PC-9 (cell line): ENCODE measurements at regions of chr7 and their contacts with region 1.

Region 1: GRCh38 chr7:105876091-105876963 is at the start of gene ATXN7L1:
- DNase-seq: peak; percentile 86 to 94
- H3K4me3 ChIP-seq: peak within 1 kb of the TSS; percentile 96
- H3K27ac ChIP-seq: peak within 1 kb of the TSS; percentile 69
- H3K4me1 ChIP-seq: peaks cover 24% of the 10 kb centered on the region
- H3K27me3 ChIP-seq: no peaks in the 10 kb centered on the region
- CTCF ChIP-seq: peak; percentile 38
- total RNA-seq, gene ATXN7L1: 10.8 and 14.6 TPM in 2 replicates

Region 2: DNA sequence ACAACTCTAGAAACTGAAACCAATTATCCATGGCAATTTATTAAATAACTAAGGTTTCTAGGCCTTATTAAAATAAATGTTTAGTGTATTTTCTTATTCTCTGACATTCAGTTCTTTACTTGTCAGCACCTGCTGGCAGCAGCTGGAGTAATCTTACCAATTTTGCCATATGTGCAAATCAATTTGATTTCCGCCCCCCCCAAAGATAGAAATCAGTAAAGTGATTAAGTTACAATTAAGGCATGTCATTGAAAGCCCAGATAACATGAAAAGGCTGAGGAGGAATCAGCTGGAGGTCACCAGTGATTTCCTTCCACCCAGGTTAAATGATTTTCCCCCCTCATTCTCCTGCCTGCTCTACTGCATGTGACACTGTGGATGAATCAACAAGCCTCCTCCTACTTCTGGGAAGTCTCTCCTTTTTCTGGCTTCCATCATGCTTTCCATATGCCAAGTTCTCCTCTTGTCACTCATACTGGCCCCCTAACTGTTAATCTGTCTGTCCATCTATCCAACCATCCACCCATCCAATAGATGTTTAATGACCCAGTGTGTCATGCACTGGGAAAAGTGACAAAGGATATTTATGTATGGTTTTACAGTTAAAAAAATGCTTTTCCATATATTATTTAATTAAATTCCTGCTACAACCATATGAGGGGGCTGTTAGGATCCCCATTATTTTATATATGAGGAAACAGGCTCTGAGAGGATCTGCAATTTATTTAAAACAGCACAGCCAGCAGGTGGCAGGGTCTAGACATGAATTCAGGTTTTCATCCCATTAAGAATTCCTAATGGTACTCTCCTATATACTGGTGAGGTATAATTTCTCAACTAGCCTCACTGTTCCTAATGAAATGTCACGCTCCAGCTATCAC is 116.4 kb before region 1 on chr7:
- CTCF ChIA-PET with region 1: interaction called, 4 read pairs
- POLR2A ChIA-PET with region 1: no interaction called
- intact Hi-C with region 1: loop called (anchors 1 kb)
- DNase-seq: peak; percentile 57 to 64
- H3K4me3 ChIP-seq: no peak overlapping the region
- H3K27ac ChIP-seq: no peak overlapping the region
- H3K4me1 ChIP-seq: no peaks in the 10 kb centered on the region
- H3K27me3 ChIP-seq: no peaks in the 10 kb centered on the region
- CTCF ChIP-seq: peak; percentile 83

Region 3: DNA sequence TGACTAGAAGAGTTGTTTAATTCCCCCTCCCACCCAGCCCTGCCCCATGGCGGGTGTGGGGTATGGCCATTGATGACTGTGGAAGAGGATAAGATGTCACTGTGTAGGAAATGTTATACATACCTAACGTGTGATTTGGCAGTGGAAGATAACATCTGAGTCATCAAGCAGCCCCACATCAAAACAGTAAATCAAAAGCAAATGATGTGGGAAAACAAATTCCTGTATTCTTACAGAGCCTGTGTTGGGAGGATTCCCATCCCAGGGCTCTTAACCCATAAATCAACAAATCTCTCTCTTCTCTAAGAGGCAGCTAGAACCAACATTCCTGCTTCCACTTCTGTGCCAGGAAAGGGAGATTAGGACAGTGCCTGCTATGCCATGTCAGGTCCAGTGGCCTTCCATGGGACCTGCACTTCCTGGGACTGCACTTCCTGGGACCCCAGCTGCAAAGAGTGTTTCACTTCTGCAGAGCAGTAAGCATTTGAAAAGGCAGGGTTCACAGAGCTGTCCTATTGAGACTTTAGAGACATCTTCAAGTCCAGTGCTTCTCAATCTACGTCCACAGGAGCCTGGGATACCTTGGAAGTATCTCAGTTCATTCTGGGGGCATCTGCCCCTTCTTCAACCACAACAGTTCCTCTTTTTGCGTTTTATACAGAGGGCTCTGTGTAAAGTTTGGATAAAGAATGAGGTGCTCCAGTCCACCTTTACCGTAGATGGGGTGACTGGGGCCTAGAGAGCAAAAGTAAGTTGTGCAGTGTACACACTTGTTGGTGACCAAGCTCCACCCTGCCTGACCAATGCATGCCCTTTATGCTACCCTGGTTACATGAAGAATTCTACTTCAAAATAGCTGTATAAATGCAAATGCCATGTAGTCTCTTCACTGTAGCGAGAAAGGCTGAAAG is 45.7 kb before region 1 on chr7:
- CTCF ChIA-PET with region 1: no interaction called
- POLR2A ChIA-PET with region 1: interaction called, 3 read pairs
- intact Hi-C with region 1: loop called (anchors 1 kb)
- DNase-seq: peak; percentile 78 to 97
- H3K4me3 ChIP-seq: no peak overlapping the region
- H3K27ac ChIP-seq: peak overlapping the region; percentile 35
- H3K4me1 ChIP-seq: peaks cover 39% of the 10 kb centered on the region
- H3K27me3 ChIP-seq: no peaks in the 10 kb centered on the region
- CTCF ChIP-seq: no peak

Region 4: DNA sequence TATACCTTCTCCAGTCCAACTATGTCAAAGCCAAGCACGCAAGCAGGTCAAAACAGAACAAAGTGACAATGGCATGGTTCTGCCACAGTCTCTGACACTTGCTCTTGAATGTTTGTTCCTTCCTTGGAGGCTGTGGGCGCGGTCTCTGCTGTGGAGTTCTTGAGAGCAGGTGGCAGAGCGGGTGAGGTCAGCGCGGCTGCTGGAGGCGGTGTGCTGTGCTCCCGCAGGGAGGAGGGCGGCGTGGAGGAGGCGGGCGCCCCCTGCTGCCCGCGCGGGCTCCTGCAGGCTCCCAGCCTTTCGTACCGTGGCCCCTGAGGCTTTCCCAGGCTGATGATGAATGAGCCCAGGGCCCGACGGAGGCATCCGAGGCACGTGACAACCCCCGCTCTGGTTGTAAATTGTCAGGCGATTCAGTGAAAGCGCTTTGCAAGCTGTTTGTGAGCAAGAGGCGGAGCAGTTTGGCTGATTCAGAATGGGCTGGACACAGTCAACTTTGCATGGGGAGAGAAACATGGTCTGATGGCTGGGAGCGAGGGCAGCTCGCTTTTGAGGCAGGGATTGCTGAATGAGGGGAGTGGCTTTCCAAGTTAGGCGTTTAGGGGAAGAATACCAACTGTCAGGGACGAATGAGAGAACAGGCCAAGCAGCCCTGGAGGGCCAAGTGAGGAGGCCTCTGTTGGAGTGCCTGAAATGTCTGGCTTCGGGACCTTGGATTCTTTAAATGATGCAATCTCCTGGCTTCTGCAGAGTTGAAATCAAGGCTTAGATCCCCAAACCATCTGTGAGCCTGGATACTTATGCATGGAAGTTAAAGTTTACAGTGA is 133.3 kb after region 1 on chr7:
- CTCF ChIA-PET with region 1: no interaction called
- POLR2A ChIA-PET with region 1: no interaction called
- intact Hi-C with region 1: loop called (anchors 1 kb)
- DNase-seq: peak; percentile 77 to 94
- H3K4me3 ChIP-seq: peak overlapping the region; percentile 4; the same call in 1 of the 2 replicates
- H3K27ac ChIP-seq: no peak overlapping the region
- H3K4me1 ChIP-seq: peaks cover 6% of the 10 kb centered on the region
- H3K27me3 ChIP-seq: no peaks in the 10 kb centered on the region
- CTCF ChIP-seq: peak; percentile 94

Region 5: DNA sequence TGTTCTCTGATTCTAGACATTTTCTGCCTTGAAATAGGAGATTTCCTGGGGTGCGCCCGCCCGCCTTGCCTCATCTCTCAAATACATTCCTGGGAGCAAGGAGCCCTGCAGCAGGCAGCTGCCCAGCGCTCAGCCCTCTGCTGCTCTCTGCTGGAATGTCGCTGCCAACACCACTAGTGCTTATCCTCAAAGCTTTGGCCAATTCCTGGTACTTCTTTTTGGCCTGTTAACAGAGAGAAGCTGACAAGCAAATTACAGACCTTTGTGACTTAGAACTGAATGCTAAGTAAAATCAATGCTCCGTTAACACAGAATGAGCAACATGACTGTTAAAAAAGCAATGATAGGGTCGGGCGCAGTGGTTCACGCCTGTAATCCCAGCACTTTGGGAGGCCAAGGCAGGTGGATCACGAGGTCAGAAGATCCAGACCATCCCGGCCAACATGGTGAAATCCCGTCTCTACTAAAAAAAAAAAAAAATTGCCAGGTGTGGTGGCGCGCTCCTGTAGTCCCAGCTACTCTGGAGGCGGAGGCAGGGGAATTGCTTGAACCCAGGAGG is 277.6 kb after region 1 on chr7:
- CTCF ChIA-PET with region 1: no interaction called
- POLR2A ChIA-PET with region 1: no interaction called
- intact Hi-C with region 1: loop called (anchors 10 kb)
- DNase-seq: peak; percentile 68 to 89
- H3K4me3 ChIP-seq: no peak overlapping the region
- H3K27ac ChIP-seq: no peak overlapping the region
- H3K4me1 ChIP-seq: peaks cover 12% of the 10 kb centered on the region
- H3K27me3 ChIP-seq: no peaks in the 10 kb centered on the region
- CTCF ChIP-seq: peak; percentile 94